ENCODE measurements at regions of chr3 and their contacts with region 1.

Region 1: DNA sequence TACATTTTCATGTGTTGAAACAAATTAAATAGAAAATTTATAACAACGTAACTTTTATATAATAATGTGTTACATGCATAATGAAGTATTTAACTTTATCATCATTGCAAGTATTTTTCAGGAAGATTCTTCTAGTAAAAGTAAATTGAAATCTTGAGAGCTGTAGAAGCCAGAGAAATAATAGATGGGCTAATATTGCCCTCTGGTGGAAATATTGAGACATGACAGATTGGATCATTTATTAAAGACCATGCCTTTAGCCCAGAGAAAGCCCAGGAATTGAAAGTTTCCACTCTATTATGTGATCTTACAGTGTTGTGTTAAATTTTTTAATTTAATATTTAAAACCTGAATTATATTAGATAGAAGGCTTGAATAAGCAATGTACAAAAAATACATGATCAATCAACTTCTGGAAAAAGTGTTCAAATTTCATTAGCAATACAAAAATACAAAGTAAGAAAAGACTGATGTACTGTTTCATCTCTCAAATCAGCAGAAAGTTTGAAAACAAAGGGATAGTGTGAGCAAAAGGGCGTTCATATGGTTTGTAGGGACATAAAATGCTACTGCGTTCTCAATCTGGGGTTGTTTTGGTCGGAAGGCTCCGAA is 52.7 kb upstream of the SPTSSB start:
- DNase-seq: peak; percentile 34
- ATAC-seq: no peak; the same call in 1 of the 2 replicates
- H3K4me3 ChIP-seq: no peak overlapping the region
- H3K27ac ChIP-seq: no peak overlapping the region
- H3K4me1 ChIP-seq: no peaks in the 10 kb centered on the region
- H3K27me3 ChIP-seq: no peaks in the 10 kb centered on the region
- CTCF ChIP-seq: peak; percentile 42 to 70 (median 68)
- POLR2A ChIP-seq: no peak
- RAD21 ChIP-seq: peak; percentile 87

Region 2: GRCh38 chr3:160577556-160578195 is 846.3 kb before region 1 on chr3:
- CTCF ChIA-PET with region 1: no interaction called
- POLR2A ChIA-PET with region 1: no interaction called
- RAD21 ChIA-PET with region 1: no interaction called
- intact Hi-C with region 1: loop called (anchors 10 kb)
- DNase-seq: peak; percentile 23
- ATAC-seq: peak; percentile 91
- H3K4me3 ChIP-seq: no peak overlapping the region
- H3K27ac ChIP-seq: no peak overlapping the region
- H3K4me1 ChIP-seq: no peaks in the 10 kb centered on the region
- H3K27me3 ChIP-seq: no peaks in the 10 kb centered on the region
- CTCF ChIP-seq: peak; percentile 44 to 61 (median 60); a peak in 5 of 6 replicates
- POLR2A ChIP-seq: no peak
- RAD21 ChIP-seq: peak; percentile 79

Region 3: GRCh38 chr3:160707187-160707794 is 716.7 kb before region 1 on chr3:
- CTCF ChIA-PET with region 1: interaction called, 4 read pairs
- POLR2A ChIA-PET with region 1: no interaction called
- RAD21 ChIA-PET with region 1: no interaction called
- intact Hi-C with region 1: loop called (anchors 5 kb)
- DNase-seq: peak; percentile 37
- ATAC-seq: peak; percentile 92
- H3K4me3 ChIP-seq: no peak overlapping the region
- H3K27ac ChIP-seq: no peak overlapping the region
- H3K4me1 ChIP-seq: no peaks in the 10 kb centered on the region
- H3K27me3 ChIP-seq: no peaks in the 10 kb centered on the region
- CTCF ChIP-seq: peak; percentile 46 to 74 (median 59); a peak in 5 of 6 replicates
- POLR2A ChIP-seq: no peak
- RAD21 ChIP-seq: peak; percentile 87

Region 4: DNA sequence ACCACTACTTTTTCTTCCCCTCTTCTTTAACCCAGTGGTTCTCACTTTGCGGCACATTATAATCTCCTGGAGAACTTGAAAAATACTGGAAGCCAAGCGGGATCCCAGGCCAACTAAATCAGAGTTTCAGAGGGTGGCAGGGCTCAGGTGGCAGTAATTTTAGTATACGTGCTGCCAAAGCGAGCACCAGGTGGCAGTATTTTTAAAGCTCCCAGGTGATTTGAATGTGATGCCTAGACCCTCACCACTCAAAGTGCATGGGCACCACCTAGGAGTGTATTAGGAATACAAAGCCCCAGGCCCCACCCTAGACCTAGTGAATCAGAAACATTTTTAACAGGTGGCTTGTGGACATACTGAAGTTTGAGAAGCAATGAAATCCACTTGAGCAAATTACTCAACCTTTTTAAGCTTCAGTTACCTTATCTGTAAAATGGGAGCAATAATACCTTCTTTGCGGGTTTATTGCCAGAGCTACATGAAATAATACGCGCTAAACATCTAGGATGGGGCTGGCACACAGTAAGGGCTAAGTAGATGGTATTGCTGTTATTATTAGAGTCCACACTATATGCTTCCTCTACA is 327.2 kb before region 1 on chr3:
- CTCF ChIA-PET with region 1: interaction called, 4 read pairs
- POLR2A ChIA-PET with region 1: no interaction called
- RAD21 ChIA-PET with region 1: no interaction called
- intact Hi-C with region 1: loop called (anchors 5 kb)
- DNase-seq: no peak
- ATAC-seq: peak; percentile 78
- H3K4me3 ChIP-seq: no peak overlapping the region
- H3K27ac ChIP-seq: no peak overlapping the region
- H3K4me1 ChIP-seq: peaks cover 0 to 5% of the 10 kb centered on the region in 2 experiments; a peak in 1 of 4 replicates
- H3K27me3 ChIP-seq: no peaks in the 10 kb centered on the region
- CTCF ChIP-seq: peak; percentile 51 to 69 (median 66); a peak in 5 of 6 replicates
- POLR2A ChIP-seq: no peak
- RAD21 ChIP-seq: peak; percentile 64